Left ventricle myocardium superior (tissue), 1 donor: ENCODE measurements at regions of chr7 and their contacts with region 1.

Region 1: DNA sequence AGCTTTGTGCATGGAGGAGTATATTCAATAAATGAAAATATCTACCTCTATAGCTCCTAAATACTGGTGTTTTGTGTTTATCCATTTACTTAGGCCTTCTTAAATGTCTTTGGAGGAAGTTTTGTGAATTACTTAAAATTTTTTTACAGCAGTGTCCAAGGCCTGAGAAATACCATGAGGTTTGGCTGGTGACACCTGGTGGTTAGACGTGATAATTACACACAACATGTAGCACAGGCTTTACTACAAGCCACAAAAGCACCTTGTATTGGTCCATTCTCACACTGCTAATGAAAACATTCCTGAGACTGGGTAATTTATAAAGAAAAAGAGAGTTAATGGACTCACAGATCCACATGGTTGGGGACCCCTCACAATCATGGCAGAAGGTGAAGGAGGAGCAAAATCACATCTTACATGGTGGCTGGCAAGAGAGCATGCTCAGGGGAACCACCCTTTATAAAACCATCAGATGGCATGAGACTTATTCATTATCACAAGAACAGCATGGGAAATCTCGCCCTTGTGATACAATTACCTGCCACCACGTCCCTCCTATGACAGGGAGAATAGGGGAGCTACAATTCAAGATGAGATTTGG is 20.6 kb downstream of the HYAL4 start:
- DNase-seq: no peak
- ATAC-seq: peak; percentile 84

Region 2: GRCh38 chr7:123674399-123675180 is 191.0 kb before region 1 on chr7:
- intact Hi-C with region 1: loop called (anchors 5 kb)
- DNase-seq: no peak
- ATAC-seq: peak; percentile 8

Region 3: GRCh38 chr7:123797673-123798527 is 67.7 kb before region 1 on chr7:
- intact Hi-C with region 1: loop called (anchors 2 kb)
- DNase-seq: no peak
- ATAC-seq: peak; percentile 50